Activated T-helper 2 cell treated with anti-CD3 and anti-CD28 coated beads, Interferon-gamma antibody, Interleukin-2, Interleukin-4, amounts not matched to agents 10 μg/mL and 5 μg/mL and 100 μg/mL, durations not matched to agents 14 hours and 24 hours and 36 hours (primary cell): ENCODE measurements at regions of chr5 and their contacts with region 1.

Region 1: GRCh38 chr5:140244525-140245025 is 58.3 kb downstream of the PFDN1 start:
- DNase-seq: peak; percentile 66
- H3K4me3 Mint-ChIP-seq: no peak overlapping the region
- H3K27ac Mint-ChIP-seq: no peak overlapping the region
- H3K4me1 Mint-ChIP-seq: peaks cover 18% of the 10 kb centered on the region
- H3K27me3 Mint-ChIP-seq: no peaks in the 10 kb centered on the region

Region 2: DNA sequence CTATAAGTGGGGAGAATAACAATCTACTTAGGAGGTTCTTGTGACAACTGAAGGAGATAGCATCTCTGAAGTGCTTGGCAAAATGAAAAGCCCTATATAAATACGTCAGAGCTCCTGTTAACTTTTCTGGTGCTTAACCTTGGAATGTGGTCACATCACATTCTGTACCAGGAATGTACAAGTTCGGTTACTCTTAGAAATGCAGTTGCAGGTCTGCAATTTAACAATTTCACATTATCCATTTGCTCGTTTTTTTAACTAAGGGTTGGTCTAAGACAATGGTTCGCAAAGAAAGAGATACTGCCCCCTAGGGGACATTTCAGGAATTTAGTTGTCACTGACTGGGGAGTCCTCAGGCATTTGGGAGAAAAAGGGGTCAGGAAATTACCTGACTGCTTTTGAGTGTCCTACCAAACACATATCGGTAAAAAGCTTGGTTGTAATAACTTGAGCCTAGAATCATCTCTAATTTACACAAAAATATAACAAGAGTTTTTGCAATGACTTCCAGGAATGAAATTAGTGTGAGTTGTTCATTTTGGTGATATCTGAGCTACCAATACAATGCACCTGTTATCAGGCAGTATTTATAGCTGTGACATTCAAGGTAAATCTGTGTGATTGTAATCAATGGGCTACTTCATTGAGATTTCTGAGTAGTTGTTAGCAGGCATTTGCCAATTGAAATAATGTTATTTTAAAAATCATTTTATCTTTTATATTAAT is 107.2 kb after region 1 on chr5:
- intact Hi-C with region 1: loop called (anchors 1 kb)
- DNase-seq: peak; percentile 45
- H3K4me3 Mint-ChIP-seq: no peak overlapping the region
- H3K27ac Mint-ChIP-seq: no peak overlapping the region
- H3K4me1 Mint-ChIP-seq: peaks cover 10% of the 10 kb centered on the region
- H3K27me3 Mint-ChIP-seq: peaks cover 15% of the 10 kb centered on the region

Region 3: DNA sequence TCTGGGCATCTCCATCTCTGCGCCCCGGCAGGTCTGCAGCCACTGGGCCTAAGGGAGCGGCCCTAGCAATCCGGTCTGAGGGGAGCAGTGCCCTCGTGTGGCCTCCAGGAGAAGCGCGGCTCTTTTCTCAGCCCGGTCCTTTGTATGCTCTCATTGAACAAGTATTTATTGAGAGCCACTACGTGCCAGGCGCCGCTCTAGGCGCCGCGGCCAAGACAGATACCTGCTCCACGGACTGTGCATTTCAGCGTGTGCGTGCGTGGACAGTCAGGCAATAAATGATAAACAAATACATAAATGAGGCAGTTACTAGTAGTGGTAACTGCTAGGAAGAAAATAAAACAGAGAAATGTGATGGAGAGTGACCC is 113.1 kb after region 1 on chr5:
- intact Hi-C with region 1: loop called (anchors 1 kb)
- DNase-seq: peak; percentile 74
- H3K4me3 Mint-ChIP-seq: peak overlapping the region; percentile 63
- H3K27ac Mint-ChIP-seq: no peak overlapping the region
- H3K4me1 Mint-ChIP-seq: peaks cover 9% of the 10 kb centered on the region
- H3K27me3 Mint-ChIP-seq: peaks cover 9% of the 10 kb centered on the region